ENCODE measurements at regions of chr1 and their contacts with region 1.

Region 1: DNA sequence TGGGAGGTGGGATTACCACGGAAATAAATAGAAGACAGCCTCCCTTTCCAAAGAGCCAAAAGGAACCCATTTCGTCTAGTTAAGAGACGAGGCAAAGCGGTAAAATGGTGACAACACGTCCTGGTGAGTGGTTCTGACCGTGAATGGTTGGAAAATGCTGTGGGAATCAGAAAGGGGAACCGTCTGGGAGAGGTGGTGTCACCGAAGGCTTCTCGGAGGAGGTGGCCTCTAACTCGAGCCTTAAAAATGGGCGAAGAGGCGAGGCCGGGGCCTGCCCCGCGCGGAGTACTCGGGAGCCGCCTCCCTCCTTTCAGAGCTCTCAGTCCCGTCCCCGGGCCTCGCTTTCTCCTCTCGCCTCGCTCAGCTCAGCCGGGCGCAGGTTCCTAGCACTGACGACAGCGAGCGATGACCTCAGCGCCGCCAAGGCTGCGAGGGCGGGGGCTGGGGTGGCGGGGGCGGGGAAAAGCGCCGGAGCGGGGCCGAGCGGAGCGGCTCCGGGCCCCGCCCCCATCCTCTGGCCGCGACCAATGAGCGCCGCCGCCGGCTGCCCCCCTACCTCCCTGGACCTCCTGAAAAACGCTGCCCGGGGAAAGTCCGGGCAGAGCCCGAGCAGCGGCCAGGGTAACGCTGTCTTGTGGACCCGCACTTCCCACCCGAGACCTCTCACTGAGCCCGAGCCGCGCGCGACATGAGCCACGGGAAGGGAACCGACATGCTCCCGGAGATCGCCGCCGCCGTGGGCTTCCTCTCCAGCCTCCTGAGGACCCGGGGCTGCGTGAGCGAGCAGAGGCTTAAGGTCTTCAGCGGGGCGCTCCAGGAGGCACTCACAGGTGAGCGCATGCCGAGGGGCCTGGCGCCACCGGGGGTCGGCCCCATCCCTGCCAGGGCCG is at the start of gene BTG2:
- DNase-seq: peak; percentile 91
- H3K4me3 ChIP-seq: peak within 1 kb of the TSS; percentile 86 to 94 (median 93)
- H3K27ac ChIP-seq: peak within 1 kb of the TSS; percentile 82
- H3K4me1 ChIP-seq: peaks cover 44% of the 10 kb centered on the region
- H3K27me3 ChIP-seq: no peaks in the 10 kb centered on the region
- CTCF ChIP-seq: no peak
- total RNA-seq, gene BTG2: 74.8 to 107 TPM

Region 2: GRCh38 chr1:203280996-203281395 is 24.2 kb before region 1 on chr1:
- CTCF ChIA-PET with region 1: interaction called, 6 read pairs
- dilution Hi-C with region 1: no loop called
- in situ Hi-C with region 1: no loop called
- intact Hi-C with region 1: loop called (anchors 1 kb)
- DNase-seq: peak; percentile 90
- H3K4me3 ChIP-seq: no peak overlapping the region
- H3K27ac ChIP-seq: peak overlapping the region; percentile 51
- H3K4me1 ChIP-seq: peaks cover 34% of the 10 kb centered on the region
- H3K27me3 ChIP-seq: no peaks in the 10 kb centered on the region
- CTCF ChIP-seq: peak in 1 of 2 donors; percentile 60

Region 3: GRCh38 chr1:203290261-203291089 is 14.7 kb before region 1 on chr1:
- CTCF ChIA-PET with region 1: interaction called, 10 read pairs
- dilution Hi-C with region 1: no loop called
- in situ Hi-C with region 1: no loop called
- intact Hi-C with region 1: no loop called
- DNase-seq: peak; percentile 62
- H3K4me3 ChIP-seq: no peak overlapping the region
- H3K27ac ChIP-seq: no peak overlapping the region
- H3K4me1 ChIP-seq: peaks cover 30% of the 10 kb centered on the region
- H3K27me3 ChIP-seq: no peaks in the 10 kb centered on the region
- CTCF ChIP-seq: no peak

Region 4: GRCh38 chr1:203326830-203327683 is 21.9 kb after region 1 on chr1:
- CTCF ChIA-PET with region 1: interaction called, 3 read pairs
- dilution Hi-C with region 1: no loop called
- in situ Hi-C with region 1: no loop called
- intact Hi-C with region 1: loop called (anchors 2 kb)
- DNase-seq: peak; percentile 89
- H3K4me3 ChIP-seq: peak overlapping the region; percentile 47 to 59 (median 51)
- H3K27ac ChIP-seq: peak overlapping the region; percentile 37
- H3K4me1 ChIP-seq: peaks cover 14% of the 10 kb centered on the region
- H3K27me3 ChIP-seq: no peaks in the 10 kb centered on the region
- CTCF ChIP-seq: no peak

Region 5: GRCh38 chr1:203420263-203420662 is 115.1 kb after region 1 on chr1:
- CTCF ChIA-PET with region 1: no interaction called
- dilution Hi-C with region 1: no loop called
- in situ Hi-C with region 1: no loop called
- intact Hi-C with region 1: no loop called
- DNase-seq: no peak
- H3K4me3 ChIP-seq: no peak overlapping the region
- H3K27ac ChIP-seq: no peak overlapping the region
- H3K4me1 ChIP-seq: peaks cover 6% of the 10 kb centered on the region
- H3K27me3 ChIP-seq: no peaks in the 10 kb centered on the region
- CTCF ChIP-seq: no peak

Measured in mammary epithelial cell (primary cell).